ENCODE measurements at regions of chr9 and their contacts with region 1.

Region 1: DNA sequence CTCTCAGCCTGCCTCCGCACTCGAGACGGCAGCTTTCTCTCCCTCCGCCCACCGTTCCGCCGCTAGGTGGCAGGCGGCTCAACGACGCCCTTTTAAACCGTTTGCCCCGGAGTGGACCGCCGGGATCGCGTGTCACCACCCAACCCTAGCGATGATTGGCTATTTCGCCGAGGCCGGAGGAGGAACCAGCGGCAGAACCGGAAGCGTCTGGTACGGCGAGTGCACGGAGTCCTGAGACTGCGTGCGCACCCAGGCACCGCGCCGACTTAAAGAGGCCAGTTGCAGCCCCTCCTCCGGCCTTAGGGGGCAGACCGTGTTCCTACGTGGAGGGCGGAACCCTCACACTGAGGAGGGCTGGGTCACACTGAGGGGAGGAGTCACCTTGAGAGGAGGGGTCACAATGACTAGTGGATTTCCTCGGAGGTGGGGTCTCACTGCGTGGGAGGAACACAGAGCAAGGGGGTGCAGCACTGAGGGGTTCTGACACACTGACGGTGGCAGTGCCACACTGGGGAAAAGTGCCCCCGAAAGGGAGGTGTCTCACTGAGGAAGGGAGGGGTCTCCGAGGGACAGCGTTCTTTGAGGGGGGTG is 980 bp upstream of the TESK1 start:
- DNase-seq: peak; percentile 100
- H3K4me3 ChIP-seq: peak overlapping the region; percentile 51 to 91 (median 86)
- H3K27ac ChIP-seq: peak overlapping the region; percentile 93 to 98 (median 96)
- H3K4me1 ChIP-seq: peaks cover 0 to 35% (median 29%) of the 10 kb centered on the region in 4 donors
- H3K27me3 ChIP-seq: no peaks in the 10 kb centered on the region
- CTCF ChIP-seq: peak; percentile 90 to 99 (median 94)
- EP300 ChIP-seq: peak in 1 of 4 donors; percentile 69
- POLR2A ChIP-seq: peak; percentile 48 to 76

Region 2: GRCh38 chr9:35111001-35111933 is 492.8 kb before region 1 on chr9:
- intact Hi-C with region 1: loop called (anchors 5 kb)
- DNase-seq: peak; percentile 99
- H3K4me3 ChIP-seq: peak overlapping the region; percentile 58 to 87 (median 72)
- H3K27ac ChIP-seq: peak overlapping the region; percentile 90 to 96 (median 92)
- H3K4me1 ChIP-seq: peaks cover 0 to 60% (median 52%) of the 10 kb centered on the region in 4 donors
- H3K27me3 ChIP-seq: no peaks in the 10 kb centered on the region
- CTCF ChIP-seq: no peak
- EP300 ChIP-seq: no peak
- POLR2A ChIP-seq: peak in 1 of 2 donors; percentile 19

Region 3: GRCh38 chr9:35563791-35564197 is 40.3 kb before region 1 on chr9:
- intact Hi-C with region 1: loop called (anchors 5 kb)
- DNase-seq: peak; percentile 83
- H3K4me3 ChIP-seq: peak overlapping the region in 3 of 4 donors; percentile 9 to 24 (median 14)
- H3K27ac ChIP-seq: peak overlapping the region; percentile 70 to 80 (median 76)
- H3K4me1 ChIP-seq: peaks cover 0 to 36% (median 26%) of the 10 kb centered on the region in 4 donors
- H3K27me3 ChIP-seq: no peaks in the 10 kb centered on the region
- CTCF ChIP-seq: no peak
- EP300 ChIP-seq: no peak
- POLR2A ChIP-seq: no peak

Region 4: DNA sequence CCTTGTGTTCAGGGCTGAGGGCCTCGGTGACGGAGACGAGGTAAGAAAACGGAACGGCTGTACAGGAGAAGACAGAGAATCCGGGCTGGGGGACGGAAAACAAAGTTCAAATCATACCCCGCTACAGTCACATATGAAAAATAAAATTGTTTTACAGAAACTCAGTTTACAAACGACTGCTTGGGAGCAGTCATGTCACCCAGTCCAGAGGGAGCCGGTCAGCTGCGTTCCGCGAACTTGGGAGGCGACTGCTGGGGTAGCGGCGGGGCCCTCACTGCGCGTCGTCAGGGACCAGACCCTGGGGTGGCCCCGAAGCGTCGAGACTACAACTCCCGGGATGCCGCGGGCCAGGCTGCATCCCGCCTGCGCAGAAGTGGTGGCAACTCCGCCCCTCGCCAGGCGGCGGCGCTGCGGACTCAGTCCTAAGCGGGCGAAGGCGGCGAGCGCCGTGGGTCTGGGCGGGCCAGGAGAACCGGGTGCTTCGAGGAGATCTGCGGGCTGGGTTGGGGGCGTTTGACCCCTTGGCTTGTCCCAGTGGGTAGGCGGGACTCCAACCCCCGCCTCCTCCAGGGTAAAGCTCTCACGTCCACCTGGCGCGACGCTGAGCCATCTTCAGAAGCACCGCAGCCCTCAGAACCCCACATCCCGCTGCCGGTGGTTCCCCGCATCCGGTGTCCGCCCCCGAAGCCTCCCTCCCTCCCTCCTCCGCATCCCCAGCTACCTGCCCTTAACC is 42.6 kb after region 1 on chr9:
- intact Hi-C with region 1: loop called (anchors 2 kb)
- DNase-seq: peak; percentile 96
- H3K4me3 ChIP-seq: peak overlapping the region; percentile 38 to 63 (median 56)
- H3K27ac ChIP-seq: peak overlapping the region; percentile 77 to 90 (median 87)
- H3K4me1 ChIP-seq: peaks cover 0 to 13% (median 11%) of the 10 kb centered on the region in 4 donors
- H3K27me3 ChIP-seq: no peaks in the 10 kb centered on the region
- CTCF ChIP-seq: peak; percentile 93 to 98 (median 95)
- EP300 ChIP-seq: peak in 1 of 4 donors; percentile 10
- POLR2A ChIP-seq: peak; percentile 86 to 91

Region 5: DNA sequence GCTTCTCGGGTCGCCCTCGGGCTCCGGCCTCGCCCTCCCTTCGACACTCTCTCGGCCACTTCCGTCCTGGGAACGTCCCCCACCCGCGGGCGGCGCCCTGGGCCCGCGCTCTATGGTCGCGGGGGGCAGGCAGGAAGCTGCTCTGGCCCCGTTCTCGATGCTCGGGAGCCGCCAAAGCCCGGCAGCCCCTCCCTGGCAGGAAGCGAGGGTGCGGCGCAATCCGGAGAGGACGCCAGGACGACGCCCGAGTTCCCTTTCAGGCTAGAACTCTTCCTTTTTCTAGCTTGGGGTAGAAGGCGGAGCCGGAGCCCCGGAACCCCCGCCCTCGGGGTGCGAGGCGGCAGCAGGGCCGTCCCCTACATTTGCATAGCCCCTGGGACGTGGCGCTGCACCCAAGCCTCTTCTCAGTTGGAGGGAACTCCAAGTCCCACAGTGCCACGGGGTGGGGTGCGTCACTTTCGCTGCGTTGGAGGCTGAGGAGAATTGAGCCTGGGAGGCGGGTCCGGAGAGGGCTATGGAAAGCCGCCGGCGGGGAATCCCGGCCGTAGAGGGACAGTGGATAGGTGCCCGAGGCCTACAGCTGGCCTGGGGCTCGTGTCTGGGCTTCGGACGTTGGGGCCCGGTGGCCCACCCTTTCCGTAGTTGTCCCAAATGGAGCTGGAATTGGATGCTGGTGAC is 128.2 kb after region 1 on chr9 and contains the starts of genes CREB3 and TLN1:
- intact Hi-C with region 1: loop called (anchors 5 kb)
- DNase-seq: peak; percentile 100
- H3K4me3 ChIP-seq: peak within 1 kb of the TSS; percentile 80 to 86 (median 82)
- H3K27ac ChIP-seq: peak within 1 kb of the TSS; percentile 97 to 99 (median 98)
- H3K4me1 ChIP-seq: peaks cover 0 to 64% (median 54%) of the 10 kb centered on the region in 4 donors
- H3K27me3 ChIP-seq: no peaks in the 10 kb centered on the region
- CTCF ChIP-seq: no peak
- EP300 ChIP-seq: peak in 2 of 4 donors; percentile 4 to 77
- POLR2A ChIP-seq: peak; percentile 73 to 91
- total RNA-seq, gene CREB3: 65.9 to 82.7 (median 75.4) TPM
- total RNA-seq, gene TLN1: 354 to 609 (median 525) TPM

Region 6: GRCh38 chr9:35748858-35749514 is 144.9 kb after region 1 on chr9 and contains the starts of genes GBA2 and RGP1:
- intact Hi-C with region 1: loop called (anchors 5 kb)
- DNase-seq: peak; percentile 92
- H3K4me3 ChIP-seq: peak within 1 kb of the TSS; percentile 87 to 97 (median 89)
- H3K27ac ChIP-seq: peak within 1 kb of the TSS; percentile 90 to 97 (median 92)
- H3K4me1 ChIP-seq: peaks cover 0 to 58% (median 56%) of the 10 kb centered on the region in 4 donors
- H3K27me3 ChIP-seq: no peaks in the 10 kb centered on the region
- CTCF ChIP-seq: no peak
- EP300 ChIP-seq: no peak
- POLR2A ChIP-seq: peak; percentile 34 to 62
- total RNA-seq, gene GBA2: 45.9 to 91.7 (median 64.8) TPM
- total RNA-seq, gene RGP1: 13.3 to 23.5 (median 13.5) TPM

Region 7: DNA sequence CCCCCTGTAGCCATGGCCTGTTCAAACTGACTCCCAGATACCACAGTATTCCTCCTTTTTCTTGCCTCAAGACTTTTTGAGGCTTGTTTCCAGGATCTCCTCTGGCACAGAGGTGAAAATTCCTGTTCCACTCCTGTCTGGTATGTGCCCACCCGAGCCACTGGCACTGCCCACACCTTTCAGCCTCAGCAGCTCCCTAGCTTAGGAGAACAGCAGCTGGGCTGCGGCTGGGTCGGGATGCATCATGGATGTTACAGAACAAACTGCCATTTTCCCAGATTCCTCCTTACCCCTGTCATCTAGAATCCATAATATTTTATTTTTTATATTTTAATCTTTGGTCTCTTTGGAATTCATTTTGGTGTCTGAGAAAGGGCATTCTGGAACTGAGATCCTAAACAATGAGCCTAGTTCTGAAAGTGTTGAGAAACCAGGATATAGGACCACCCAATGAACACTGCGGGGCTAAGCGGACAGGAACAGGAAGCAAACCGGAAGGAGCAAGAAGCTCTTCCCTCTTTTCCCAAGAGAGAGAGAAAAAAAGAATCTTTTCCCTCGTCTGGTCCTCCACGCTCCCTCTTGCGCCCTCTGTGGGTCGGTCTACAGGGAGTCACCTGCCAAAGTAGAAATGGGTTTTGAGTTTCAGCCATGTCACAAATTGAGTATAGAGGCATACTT is 341.4 kb after region 1 on chr9:
- intact Hi-C with region 1: no loop called
- DNase-seq: peak; percentile 91
- H3K4me3 ChIP-seq: peak overlapping the region in 2 of 4 donors; percentile 2 to 22
- H3K27ac ChIP-seq: peak overlapping the region in 3 of 4 donors; percentile 3 to 32 (median 20)
- H3K4me1 ChIP-seq: peaks cover 0 to 5% (median 4%) of the 10 kb centered on the region in 4 donors
- H3K27me3 ChIP-seq: no peaks in the 10 kb centered on the region
- CTCF ChIP-seq: peak; percentile 71 to 85 (median 80)
- EP300 ChIP-seq: no peak
- POLR2A ChIP-seq: no peak

Region 8: GRCh38 chr9:36218411-36218901 is 614.4 kb after region 1 on chr9:
- intact Hi-C with region 1: no loop called
- DNase-seq: no peak
- H3K4me3 ChIP-seq: no peak overlapping the region
- H3K27ac ChIP-seq: no peak overlapping the region
- H3K4me1 ChIP-seq: peaks cover 0 to 31% (median 13%) of the 10 kb centered on the region in 4 donors
- H3K27me3 ChIP-seq: no peaks in the 10 kb centered on the region
- CTCF ChIP-seq: no peak
- EP300 ChIP-seq: no peak
- POLR2A ChIP-seq: no peak